Heart left ventricle (tissue), 16 donors: ENCODE measurements at regions of chr13 and their contacts with region 1.

Region 1: GRCh38 chr13:27171827-27172494 is 350 bp upstream of the USP12 start:
- DNase-seq: peak; percentile 93 to 96 (median 95)
- ATAC-seq: peak; percentile 93 to 99 (median 96)
- H3K4me3 ChIP-seq: peak overlapping the region; percentile 22 to 93 (median 75)
- H3K27ac ChIP-seq: peak overlapping the region; percentile 76 to 99 (median 93)
- H3K4me1 ChIP-seq: peaks cover 8 to 54% (median 35%) of the 10 kb centered on the region in 12 donors
- H3K27me3 ChIP-seq: no peaks in the 10 kb centered on the region
- CTCF ChIP-seq: peak in 7 of 12 donors; percentile 16 to 48 (median 28)
- POLR2A ChIP-seq: no peak

Region 2: DNA sequence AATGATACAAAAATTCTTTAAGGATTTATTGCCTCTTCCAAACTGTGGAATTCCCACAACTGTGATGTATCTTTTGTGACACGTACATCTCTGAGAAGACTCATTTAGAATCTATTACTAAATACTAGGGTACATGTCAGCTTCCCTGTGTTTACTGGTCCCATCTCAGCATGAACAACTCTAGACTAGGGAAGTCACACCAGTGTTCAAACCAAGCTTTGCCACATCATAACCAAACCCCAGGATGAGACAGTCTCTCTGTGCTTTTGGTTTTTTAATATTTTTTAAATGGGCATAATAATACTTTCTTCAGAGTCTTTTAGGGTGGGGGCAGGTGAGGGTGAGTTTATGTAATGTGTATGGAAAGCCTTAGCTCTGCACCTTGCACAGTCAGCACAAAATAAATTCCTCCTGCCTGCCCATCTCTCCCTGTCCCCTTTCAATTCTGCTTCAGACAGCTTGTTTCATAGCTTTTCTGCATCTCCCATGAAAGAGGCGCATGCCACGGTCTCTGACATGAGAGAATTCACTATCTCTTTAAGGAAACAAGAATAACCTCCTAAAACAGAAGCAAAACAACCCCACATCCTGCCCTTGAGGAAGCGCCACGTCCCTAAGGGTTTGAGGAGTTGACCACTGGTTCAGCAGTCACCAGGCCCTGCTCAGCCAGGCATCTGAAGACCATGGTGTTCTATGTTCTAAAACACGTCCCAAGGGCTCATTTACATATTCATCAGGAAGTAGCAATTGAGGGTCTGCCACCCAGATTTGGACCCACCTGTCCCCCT is 174.8 kb before region 1 on chr13:
- intact Hi-C with region 1: loop called in 2 of 10 experiments (anchors 10 kb)
- DNase-seq: peak in 2 of 5 donors; percentile 46 to 51
- ATAC-seq: peak in 3 of 4 donors; percentile 34 to 79 (median 55)
- H3K4me3 ChIP-seq: no peak overlapping the region
- H3K27ac ChIP-seq: peak overlapping the region in 7 of 12 donors; percentile 8 to 67 (median 45)
- H3K4me1 ChIP-seq: peaks cover 0 to 27% (median 5%) of the 10 kb centered on the region in 12 donors
- H3K27me3 ChIP-seq: no peaks in the 10 kb centered on the region
- CTCF ChIP-seq: no peak
- POLR2A ChIP-seq: no peak

Region 3: GRCh38 chr13:27097691-27098090 is 74.3 kb before region 1 on chr13:
- intact Hi-C with region 1: loop called in 1 of 10 experiments (anchors 10 kb)
- DNase-seq: no peak
- ATAC-seq: no peak
- H3K4me3 ChIP-seq: no peak overlapping the region
- H3K27ac ChIP-seq: no peak overlapping the region
- H3K4me1 ChIP-seq: peaks cover 0 to 8% (median 0%) of the 10 kb centered on the region in 12 donors
- H3K27me3 ChIP-seq: no peaks in the 10 kb centered on the region
- CTCF ChIP-seq: no peak
- POLR2A ChIP-seq: no peak

Region 4: GRCh38 chr13:27251166-27252091 is 79.5 kb after region 1 on chr13 and contains the start of gene RPL21:
- intact Hi-C with region 1: loop called in 9 of 10 experiments (anchors 1 to 5 kb)
- DNase-seq: peak; percentile 96 to 99 (median 97)
- ATAC-seq: peak; percentile 99
- H3K4me3 ChIP-seq: peak within 1 kb of the TSS; percentile 69 to 96 (median 80)
- H3K27ac ChIP-seq: peak within 1 kb of the TSS; percentile 92 to 99 (median 96)
- H3K4me1 ChIP-seq: peaks cover 12 to 48% (median 26%) of the 10 kb centered on the region in 12 donors
- H3K27me3 ChIP-seq: no peaks in the 10 kb centered on the region
- CTCF ChIP-seq: no peak
- POLR2A ChIP-seq: peak in 1 of 2 donors; percentile 90
- total RNA-seq, gene RPL21: 292 to 825 (median 609) TPM

Region 5: GRCh38 chr13:27341616-27342015 is 169.7 kb after region 1 on chr13:
- intact Hi-C with region 1: loop called in 1 of 10 experiments (anchors 10 kb)
- DNase-seq: no peak
- ATAC-seq: no peak
- H3K4me3 ChIP-seq: no peak overlapping the region
- H3K27ac ChIP-seq: no peak overlapping the region
- H3K4me1 ChIP-seq: no peaks in the 10 kb centered on the region
- H3K27me3 ChIP-seq: peaks cover 0 to 9% (median 0%) of the 10 kb centered on the region in 9 donors
- CTCF ChIP-seq: no peak
- POLR2A ChIP-seq: no peak

Region 6: DNA sequence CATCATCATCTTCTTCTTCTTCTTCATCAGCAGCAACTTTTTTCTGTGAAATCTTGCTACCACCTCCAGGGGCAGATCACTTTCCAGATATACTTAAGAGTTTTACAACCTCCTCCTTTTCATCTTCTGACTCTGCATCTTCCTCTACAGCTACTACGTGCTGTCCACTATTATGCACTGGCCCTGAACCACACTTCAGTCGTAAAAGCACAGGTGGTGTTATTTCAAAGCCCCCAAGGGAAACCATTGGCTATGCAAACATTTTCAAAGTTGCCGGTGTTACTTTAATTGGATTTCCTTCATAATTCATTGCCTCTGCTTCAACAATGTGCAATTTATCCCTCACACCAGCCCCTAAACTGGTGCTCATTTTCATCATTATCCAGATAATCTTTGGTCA is 524.8 kb after region 1 on chr13:
- intact Hi-C with region 1: no loop called
- DNase-seq: no peak
- ATAC-seq: no peak
- H3K4me3 ChIP-seq: no peak overlapping the region
- H3K27ac ChIP-seq: no peak overlapping the region
- H3K4me1 ChIP-seq: no peaks in the 10 kb centered on the region
- H3K27me3 ChIP-seq: peaks cover 0 to 2% (median 0%) of the 10 kb centered on the region in 9 donors
- CTCF ChIP-seq: no peak
- POLR2A ChIP-seq: no peak